Activated CD8-positive, alpha-beta T cell treated with anti-CD3 and anti-CD28 coated beads for 36 hours (primary cell): ENCODE measurements at regions of chr2 and their contacts with region 1.

Region 1: GRCh38 chr2:24342110-24342910 is 18.0 kb downstream of the ITSN2 start:
- DNase-seq: no peak
- ATAC-seq: peak; percentile 57
- H3K4me3 Mint-ChIP-seq: no peak overlapping the region
- H3K27ac Mint-ChIP-seq: peak overlapping the region; percentile 10
- H3K4me1 Mint-ChIP-seq: peaks cover 59% of the 10 kb centered on the region
- H3K27me3 Mint-ChIP-seq: no peaks in the 10 kb centered on the region
- CTCF ChIP-seq: no peak

Region 2: GRCh38 chr2:24088821-24089359 is 253.4 kb before region 1 on chr2:
- CTCF ChIA-PET with region 1: no interaction called
- POLR2A ChIA-PET with region 1: no interaction called
- intact Hi-C with region 1: no loop called
- DNase-seq: no peak
- ATAC-seq: no peak
- H3K4me3 Mint-ChIP-seq: no peak overlapping the region
- H3K27ac Mint-ChIP-seq: no peak overlapping the region
- H3K4me1 Mint-ChIP-seq: peaks cover 9% of the 10 kb centered on the region
- H3K27me3 Mint-ChIP-seq: no peaks in the 10 kb centered on the region
- CTCF ChIP-seq: no peak

Region 3: GRCh38 chr2:24181849-24182248 is 160.5 kb before region 1 on chr2:
- CTCF ChIA-PET with region 1: no interaction called
- POLR2A ChIA-PET with region 1: no interaction called
- intact Hi-C with region 1: no loop called
- DNase-seq: no peak
- ATAC-seq: no peak
- H3K4me3 Mint-ChIP-seq: no peak overlapping the region
- H3K27ac Mint-ChIP-seq: no peak overlapping the region
- H3K4me1 Mint-ChIP-seq: peaks cover under 1% of the 10 kb centered on the region
- H3K27me3 Mint-ChIP-seq: no peaks in the 10 kb centered on the region
- CTCF ChIP-seq: no peak

Region 4: GRCh38 chr2:24360050-24360962 is 18.0 kb after region 1 on chr2 and contains the start of gene ITSN2:
- CTCF ChIA-PET with region 1: interaction called, 3 read pairs
- POLR2A ChIA-PET with region 1: interaction called, 15 read pairs
- intact Hi-C with region 1: no loop called
- DNase-seq: peak; percentile 87
- ATAC-seq: peak; percentile 90
- H3K4me3 Mint-ChIP-seq: peak within 1 kb of the TSS; percentile 84
- H3K27ac Mint-ChIP-seq: peak within 1 kb of the TSS; percentile 91
- H3K4me1 Mint-ChIP-seq: peaks cover 24% of the 10 kb centered on the region
- H3K27me3 Mint-ChIP-seq: no peaks in the 10 kb centered on the region
- CTCF ChIP-seq: no peak
- total RNA-seq, gene ITSN2: 44.0 to 48.6 TPM

Region 5: GRCh38 chr2:24515831-24516230 is 173.5 kb after region 1 on chr2:
- CTCF ChIA-PET with region 1: no interaction called
- POLR2A ChIA-PET with region 1: no interaction called
- intact Hi-C with region 1: no loop called
- DNase-seq: peak; percentile 17
- ATAC-seq: peak; percentile 72
- H3K4me3 Mint-ChIP-seq: no peak overlapping the region
- H3K27ac Mint-ChIP-seq: no peak overlapping the region
- H3K4me1 Mint-ChIP-seq: peaks cover 61% of the 10 kb centered on the region
- H3K27me3 Mint-ChIP-seq: no peaks in the 10 kb centered on the region
- CTCF ChIP-seq: no peak